ENCODE measurements at regions of chr7 and their contacts with region 1.

Region 1: GRCh38 chr7:27160546-27161213 is 4.2 kb upstream of the HOXA7 start:
- DNase-seq: peak; percentile 97

Region 2: DNA sequence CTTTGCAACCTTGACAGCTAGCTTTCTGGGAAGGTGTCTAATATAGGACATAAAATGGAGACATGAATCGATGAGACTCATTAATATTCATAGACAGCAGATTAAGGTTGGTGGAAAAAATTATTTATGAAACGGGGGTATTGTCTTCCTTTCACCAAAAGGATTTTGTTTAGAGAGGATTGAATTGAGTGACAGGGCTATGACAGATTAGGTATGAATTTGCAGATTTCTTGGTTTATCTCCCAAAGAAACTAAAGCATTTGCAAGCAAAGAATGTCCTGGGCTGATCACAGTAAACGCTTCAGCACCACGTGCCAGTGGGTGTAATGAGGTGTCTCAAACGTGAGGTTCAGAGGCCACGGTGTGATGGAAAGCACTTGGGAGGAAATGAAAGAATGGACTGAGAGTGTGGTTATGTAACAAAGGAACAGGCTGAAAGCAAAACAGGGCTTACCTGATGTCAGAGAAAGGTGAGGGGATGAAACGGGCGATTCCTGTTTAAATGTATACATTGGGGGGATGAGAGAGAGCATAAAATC is 1603.2 kb before region 1 on chr7:
- intact Hi-C with region 1: no loop called
- DNase-seq: no peak

Region 3: GRCh38 chr7:25894902-25895791 is 1265.5 kb before region 1 on chr7:
- intact Hi-C with region 1: loop called in 1 of 2 experiments (anchors 10 kb)
- DNase-seq: peak; percentile 90

Region 4: GRCh38 chr7:26200444-26201246 is 960.0 kb before region 1 on chr7 and contains the start of gene HNRNPA2B1:
- intact Hi-C with region 1: loop called (anchors 10 kb)
- DNase-seq: peak; percentile 99
- total RNA-seq, gene HNRNPA2B1: 269 to 275 TPM

Region 5: DNA sequence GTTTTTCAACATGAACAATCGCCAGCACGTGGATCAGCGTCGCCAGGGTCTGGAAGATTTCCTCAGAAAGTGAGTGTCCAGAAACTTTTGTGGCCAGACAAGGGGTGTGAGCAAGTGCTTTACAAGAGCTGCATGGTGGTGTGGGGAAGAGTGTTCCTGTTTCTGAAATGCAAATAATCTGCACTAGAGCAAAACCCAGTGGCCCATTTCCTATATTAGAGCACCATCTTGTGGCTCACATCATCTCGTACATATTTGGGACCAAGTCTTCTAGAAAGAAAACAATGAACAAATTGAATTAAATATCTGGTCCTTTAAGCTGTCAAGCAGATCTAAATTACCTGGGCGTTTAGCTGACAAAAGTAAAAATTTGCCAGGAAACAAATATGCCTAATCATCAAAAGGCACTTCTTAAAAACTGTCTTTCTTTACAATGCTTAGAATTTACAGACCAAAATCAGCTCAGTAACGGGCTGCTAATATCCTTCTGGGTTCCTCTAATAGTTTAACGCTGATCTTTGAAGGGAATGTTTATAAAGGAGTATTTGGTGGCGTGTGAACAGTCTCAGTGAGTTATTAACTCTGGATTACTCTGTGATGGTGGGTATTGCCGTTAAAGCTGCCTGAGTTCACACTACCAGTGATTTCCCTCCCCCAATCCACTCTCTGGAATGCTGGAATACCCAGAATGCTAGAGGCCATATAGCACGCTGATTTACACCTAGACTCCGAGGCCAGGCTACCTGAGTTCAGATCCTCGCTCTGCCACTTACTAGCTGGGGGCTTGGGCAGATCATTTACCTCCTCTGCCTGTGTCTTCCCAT is 795.4 kb before region 1 on chr7:
- intact Hi-C with region 1: loop called (anchors 5 to 10 kb)
- DNase-seq: no peak

Region 6: GRCh38 chr7:26376175-26376917 is 784.3 kb before region 1 on chr7:
- intact Hi-C with region 1: loop called in 1 of 2 experiments (anchors 10 kb)
- DNase-seq: no peak